Activated CD4-positive, alpha-beta memory T cell treated with anti-CD3 and anti-CD28 coated beads for 36 hours (primary cell): ENCODE measurements at regions of chr3 and their contacts with region 1.

Region 1: GRCh38 chr3:4906107-4906621 is 73.1 kb upstream of the BHLHE40 start:
- DNase-seq: peak; percentile 72
- H3K4me3 Mint-ChIP-seq: no peak overlapping the region
- H3K27ac Mint-ChIP-seq: peak overlapping the region; percentile 72
- H3K4me1 Mint-ChIP-seq: peaks cover 70% of the 10 kb centered on the region
- H3K27me3 Mint-ChIP-seq: no peaks in the 10 kb centered on the region

Region 2: DNA sequence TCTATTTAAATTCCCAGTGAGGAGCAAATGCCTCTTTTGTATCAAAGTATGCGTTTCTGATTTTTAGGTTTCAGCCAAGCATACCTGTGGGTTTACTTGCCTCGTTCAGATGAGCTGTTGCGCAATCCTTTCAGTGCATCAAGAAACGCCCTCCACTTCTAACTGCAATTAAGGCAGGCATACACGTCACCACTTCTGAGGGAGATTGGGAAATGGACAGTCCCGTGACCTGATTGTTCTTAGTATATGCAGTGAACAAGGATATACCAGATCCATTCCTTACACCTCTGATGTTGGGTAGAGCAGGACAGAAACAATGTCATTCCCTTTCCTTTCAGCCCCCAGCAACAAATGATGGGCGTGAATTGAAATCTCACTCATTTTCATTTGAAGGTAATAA is 194.0 kb before region 1 on chr3:
- CTCF ChIA-PET with region 1: interaction called, 13 read pairs
- POLR2A ChIA-PET with region 1: no interaction called
- intact Hi-C with region 1: no loop called
- DNase-seq: no peak
- H3K4me3 Mint-ChIP-seq: no peak overlapping the region
- H3K27ac Mint-ChIP-seq: no peak overlapping the region
- H3K4me1 Mint-ChIP-seq: peaks cover 1% of the 10 kb centered on the region
- H3K27me3 Mint-ChIP-seq: no peaks in the 10 kb centered on the region

Region 3: DNA sequence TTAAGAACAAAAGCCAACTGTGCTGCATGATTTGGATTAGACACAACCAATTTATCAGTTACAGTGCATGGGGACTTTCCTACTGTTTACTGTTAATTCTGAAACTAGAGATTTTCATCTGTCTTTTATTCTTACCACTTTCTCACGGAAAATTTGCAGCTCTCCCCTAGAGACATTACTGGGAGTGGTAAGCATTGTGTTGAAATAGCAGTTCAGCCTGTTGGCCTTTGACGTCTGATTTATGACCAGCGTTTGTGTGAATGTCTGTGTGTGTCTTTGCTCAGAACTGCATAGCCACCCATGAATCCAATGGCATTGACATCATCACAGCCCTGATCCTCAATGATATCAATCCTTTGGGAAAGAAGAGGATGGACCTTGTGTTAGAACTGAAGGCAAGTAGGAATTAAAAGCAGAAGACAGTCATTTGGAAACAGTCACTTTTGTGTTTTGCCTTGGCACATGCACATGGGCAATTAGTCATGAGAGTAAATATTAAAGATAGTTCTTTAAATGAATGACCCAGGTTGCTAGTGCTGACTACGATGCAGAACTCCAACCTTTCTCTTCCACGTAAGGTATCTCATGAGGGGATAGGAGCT is 129.1 kb before region 1 on chr3:
- CTCF ChIA-PET with region 1: no interaction called
- POLR2A ChIA-PET with region 1: no interaction called
- intact Hi-C with region 1: loop called (anchors 1 kb)
- DNase-seq: peak; percentile 45
- H3K4me3 Mint-ChIP-seq: peak overlapping the region; percentile 47
- H3K27ac Mint-ChIP-seq: peak overlapping the region; percentile 91
- H3K4me1 Mint-ChIP-seq: peaks cover 37% of the 10 kb centered on the region
- H3K27me3 Mint-ChIP-seq: no peaks in the 10 kb centered on the region

Region 4: GRCh38 chr3:4834403-4834866 is 71.7 kb before region 1 on chr3:
- CTCF ChIA-PET with region 1: interaction called, 3 read pairs
- POLR2A ChIA-PET with region 1: interaction called, 5 read pairs
- intact Hi-C with region 1: loop called (anchors 1 kb)
- DNase-seq: peak; percentile 90
- H3K4me3 Mint-ChIP-seq: peak overlapping the region; percentile 49
- H3K27ac Mint-ChIP-seq: peak overlapping the region; percentile 84
- H3K4me1 Mint-ChIP-seq: peaks cover 86% of the 10 kb centered on the region
- H3K27me3 Mint-ChIP-seq: no peaks in the 10 kb centered on the region

Region 5: GRCh38 chr3:4888913-4889846 is 17.0 kb before region 1 on chr3:
- CTCF ChIA-PET with region 1: interaction called, 4 read pairs
- POLR2A ChIA-PET with region 1: interaction called, 5 read pairs
- intact Hi-C with region 1: loop called (anchors 1 kb)
- DNase-seq: peak; percentile 67
- H3K4me3 Mint-ChIP-seq: no peak overlapping the region
- H3K27ac Mint-ChIP-seq: peak overlapping the region; percentile 90
- H3K4me1 Mint-ChIP-seq: peaks cover 31% of the 10 kb centered on the region
- H3K27me3 Mint-ChIP-seq: no peaks in the 10 kb centered on the region

Region 6: DNA sequence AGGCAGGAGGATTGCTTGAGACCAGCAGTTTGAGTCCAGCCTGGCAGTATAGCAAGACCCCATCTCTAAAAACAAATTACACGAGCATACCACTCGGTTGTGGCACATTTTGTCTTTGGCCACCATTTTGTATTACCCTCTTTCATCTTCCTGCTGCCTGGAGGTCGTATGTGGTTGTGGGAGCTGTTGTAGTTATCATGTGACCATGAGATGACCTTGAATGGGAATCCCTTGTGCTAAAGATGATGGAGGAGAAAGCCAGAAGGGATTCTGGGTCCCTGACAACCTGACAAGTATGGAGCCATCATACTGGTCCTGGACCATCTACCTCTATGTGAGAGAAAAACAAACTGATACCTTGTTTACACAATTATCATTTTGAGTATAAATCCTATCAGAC is 27.9 kb after region 1 on chr3:
- CTCF ChIA-PET with region 1: no interaction called
- POLR2A ChIA-PET with region 1: no interaction called
- intact Hi-C with region 1: no loop called
- DNase-seq: no peak
- H3K4me3 Mint-ChIP-seq: no peak overlapping the region
- H3K27ac Mint-ChIP-seq: no peak overlapping the region
- H3K4me1 Mint-ChIP-seq: peaks cover 17% of the 10 kb centered on the region
- H3K27me3 Mint-ChIP-seq: no peaks in the 10 kb centered on the region

Region 7: DNA sequence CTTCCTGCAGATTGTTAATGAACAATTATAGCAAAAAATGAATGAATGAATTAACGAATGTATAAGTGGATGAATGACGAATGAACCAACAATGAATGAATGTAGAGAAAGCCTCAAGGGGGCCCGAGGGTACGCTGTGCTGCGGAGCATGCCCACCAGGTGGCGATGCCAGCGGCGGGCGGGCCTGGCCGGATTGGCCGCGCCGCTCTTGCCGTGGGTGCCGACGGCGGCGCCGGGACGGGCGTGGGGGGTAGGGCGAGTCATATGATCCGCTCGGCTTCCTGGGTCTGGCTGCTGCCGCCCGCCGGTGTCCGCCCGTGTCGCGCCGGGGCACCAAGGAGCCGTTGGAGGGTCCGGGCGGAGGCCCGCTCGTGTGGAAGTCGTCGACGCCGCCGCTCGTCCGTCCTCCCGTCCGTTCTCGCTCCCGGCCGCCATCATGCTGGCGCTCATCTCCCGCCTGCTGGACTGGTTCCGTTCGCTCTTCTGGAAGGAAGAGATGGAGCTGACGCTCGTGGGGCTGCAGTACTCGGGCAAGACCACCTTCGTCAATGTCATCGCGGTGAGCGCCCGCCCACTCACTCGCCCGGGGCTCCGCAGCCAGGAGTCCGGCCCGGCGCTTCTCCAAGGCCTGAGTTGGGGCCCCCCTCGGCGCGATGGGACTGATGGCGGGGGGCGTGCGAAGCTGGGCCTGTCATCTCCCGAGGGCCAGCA is 216.0 kb after region 1 on chr3 and contains the start of gene ARL8B:
- CTCF ChIA-PET with region 1: no interaction called
- POLR2A ChIA-PET with region 1: no interaction called
- intact Hi-C with region 1: loop called (anchors 10 kb)
- DNase-seq: peak; percentile 95
- H3K4me3 Mint-ChIP-seq: peak within 1 kb of the TSS; percentile 85
- H3K27ac Mint-ChIP-seq: peak within 1 kb of the TSS; percentile 92
- H3K4me1 Mint-ChIP-seq: peaks cover 41% of the 10 kb centered on the region
- H3K27me3 Mint-ChIP-seq: no peaks in the 10 kb centered on the region
- total RNA-seq, gene ARL8B: 55.4 to 58.5 TPM

Region 8: DNA sequence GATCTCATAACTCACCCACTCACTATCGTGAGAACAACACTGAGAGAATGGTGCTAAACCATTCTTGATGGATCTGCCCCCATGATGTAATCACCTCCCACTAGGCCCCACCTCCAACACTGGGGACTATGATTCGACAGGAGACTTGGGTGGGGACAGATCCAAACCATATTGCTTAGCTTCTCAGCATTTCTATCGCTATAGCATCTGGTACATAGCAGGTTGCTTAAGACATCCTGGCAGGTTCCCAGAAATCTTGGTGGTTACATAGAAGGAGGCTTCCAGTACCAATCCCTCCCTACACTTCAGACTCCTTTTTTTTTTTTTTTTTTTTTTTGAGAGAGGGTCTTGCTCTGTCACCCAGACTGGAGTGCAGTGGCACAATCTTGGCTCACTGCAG is 769.2 kb after region 1 on chr3:
- CTCF ChIA-PET with region 1: no interaction called
- POLR2A ChIA-PET with region 1: no interaction called
- intact Hi-C with region 1: no loop called
- DNase-seq: no peak
- H3K4me3 Mint-ChIP-seq: no peak overlapping the region
- H3K27ac Mint-ChIP-seq: no peak overlapping the region
- H3K4me1 Mint-ChIP-seq: no peaks in the 10 kb centered on the region
- H3K27me3 Mint-ChIP-seq: no peaks in the 10 kb centered on the region